ENCODE measurements at regions of chr14 and their contacts with region 1.

Region 1: GRCh38 chr14:68084256-68084655 is 264.7 kb downstream of the RAD51B start:
- DNase-seq: no peak
- ATAC-seq: no peak
- H3K4me3 ChIP-seq: no peak overlapping the region
- H3K27ac ChIP-seq: no peak overlapping the region
- H3K4me1 ChIP-seq: peaks cover 0 to 7% (median 0%) of the 10 kb centered on the region in 9 donors
- H3K27me3 ChIP-seq: no peaks in the 10 kb centered on the region
- CTCF ChIP-seq: no peak

Region 2: GRCh38 chr14:68210729-68211299 is 126.6 kb after region 1 on chr14:
- intact Hi-C with region 1: no loop called
- DNase-seq: peak in 1 of 2 donors; percentile 25
- ATAC-seq: peak in 7 of 8 donors; percentile 69 to 85 (median 74)
- H3K4me3 ChIP-seq: peak overlapping the region in 6 of 10 donors; percentile 4 to 34 (median 18)
- H3K27ac ChIP-seq: peak overlapping the region; percentile 9 to 81 (median 55)
- H3K4me1 ChIP-seq: peaks cover 0 to 55% (median 30%) of the 10 kb centered on the region in 9 donors
- H3K27me3 ChIP-seq: no peaks in the 10 kb centered on the region
- CTCF ChIP-seq: no peak

Region 3: GRCh38 chr14:68807148-68807600 is 722.9 kb after region 1 on chr14:
- intact Hi-C with region 1: loop called in 1 of 10 experiments (anchors 5 kb)
- DNase-seq: peak; percentile 59 to 77
- ATAC-seq: peak; percentile 59 to 87 (median 68)
- H3K4me3 ChIP-seq: peak overlapping the region in 1 of 10 donors; percentile 2
- H3K27ac ChIP-seq: peak overlapping the region; percentile 57 to 85 (median 74)
- H3K4me1 ChIP-seq: peaks cover 13 to 50% (median 24%) of the 10 kb centered on the region in 9 donors
- H3K27me3 ChIP-seq: no peaks in the 10 kb centered on the region
- CTCF ChIP-seq: no peak